ENCODE measurements at regions of chr9 and their contacts with region 1.

Region 1: DNA sequence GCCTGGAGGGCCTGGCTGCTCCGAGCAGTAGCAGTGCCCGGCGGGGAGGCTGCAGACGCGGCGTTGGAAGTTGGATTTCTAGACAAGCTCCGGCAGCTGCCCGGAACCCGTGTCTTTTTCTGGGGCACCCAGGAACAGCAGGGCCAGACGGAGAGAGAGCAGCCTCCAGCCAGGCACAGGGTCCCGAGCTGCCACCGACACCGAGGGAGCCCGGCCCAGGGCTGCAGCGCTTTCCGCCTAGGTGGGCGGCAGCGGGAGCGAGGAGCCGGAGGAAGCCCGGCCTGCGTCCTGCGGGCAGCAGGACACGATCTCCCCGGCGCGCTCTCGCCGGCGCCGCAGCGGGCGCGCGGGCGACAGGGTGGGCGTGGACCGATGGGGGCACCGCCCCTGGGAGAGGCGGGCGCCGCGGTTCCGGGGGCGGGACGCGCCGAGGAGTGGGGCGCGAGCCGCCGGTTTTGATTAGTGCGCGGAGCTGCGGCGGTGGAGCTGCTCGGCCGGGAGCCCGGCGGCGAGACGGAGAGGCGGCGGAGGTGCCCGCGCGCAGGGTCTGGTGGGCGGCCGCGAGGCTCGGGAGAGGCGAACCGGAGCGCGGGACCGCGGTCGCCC is at the start of gene UGCG:
- DNase-seq: peak; percentile 68 to 96
- H3K4me3 ChIP-seq: peak within 1 kb of the TSS; percentile 76
- H3K27ac ChIP-seq: peak within 1 kb of the TSS; percentile 83
- H3K4me1 ChIP-seq: peaks cover 59% of the 10 kb centered on the region
- H3K27me3 ChIP-seq: no peaks in the 10 kb centered on the region
- CTCF ChIP-seq: no peak
- total RNA-seq, gene UGCG: 79.8 and 88.7 TPM in 2 replicates

Region 2: DNA sequence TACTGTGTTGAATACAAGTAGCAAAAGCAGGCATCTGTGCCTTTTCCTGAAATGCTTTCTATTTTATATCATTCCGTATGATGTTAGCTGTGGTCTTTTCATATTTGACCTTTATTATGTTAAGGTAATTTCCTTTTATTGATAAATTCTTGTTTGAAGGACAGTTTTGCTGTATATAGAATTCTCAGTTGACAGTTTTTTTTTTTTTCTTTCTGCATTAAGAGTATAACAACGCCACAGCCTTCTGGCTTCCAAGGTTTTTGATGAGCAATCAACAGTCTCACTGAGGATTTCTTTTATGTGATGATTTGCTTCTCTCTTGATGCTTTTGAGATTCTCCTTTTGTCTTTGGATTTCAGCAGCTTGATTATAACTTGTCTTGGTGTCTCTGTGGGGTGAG is 347.8 kb before region 1 on chr9:
- CTCF ChIA-PET with region 1: no interaction called
- POLR2A ChIA-PET with region 1: no interaction called
- intact Hi-C with region 1: no loop called
- DNase-seq: no peak
- H3K4me3 ChIP-seq: no peak overlapping the region
- H3K27ac ChIP-seq: no peak overlapping the region
- H3K4me1 ChIP-seq: no peaks in the 10 kb centered on the region
- H3K27me3 ChIP-seq: no peaks in the 10 kb centered on the region
- CTCF ChIP-seq: no peak

Region 3: GRCh38 chr9:111759762-111760639 is 136.5 kb before region 1 on chr9:
- CTCF ChIA-PET with region 1: no interaction called
- POLR2A ChIA-PET with region 1: interaction called, 3 read pairs
- intact Hi-C with region 1: loop called (anchors 1 kb)
- DNase-seq: peak; percentile 53 to 73
- H3K4me3 ChIP-seq: no peak overlapping the region
- H3K27ac ChIP-seq: no peak overlapping the region
- H3K4me1 ChIP-seq: peaks cover 6% of the 10 kb centered on the region; the same call in 1 of the 2 replicates
- H3K27me3 ChIP-seq: no peaks in the 10 kb centered on the region
- CTCF ChIP-seq: peak; percentile 81

Region 4: DNA sequence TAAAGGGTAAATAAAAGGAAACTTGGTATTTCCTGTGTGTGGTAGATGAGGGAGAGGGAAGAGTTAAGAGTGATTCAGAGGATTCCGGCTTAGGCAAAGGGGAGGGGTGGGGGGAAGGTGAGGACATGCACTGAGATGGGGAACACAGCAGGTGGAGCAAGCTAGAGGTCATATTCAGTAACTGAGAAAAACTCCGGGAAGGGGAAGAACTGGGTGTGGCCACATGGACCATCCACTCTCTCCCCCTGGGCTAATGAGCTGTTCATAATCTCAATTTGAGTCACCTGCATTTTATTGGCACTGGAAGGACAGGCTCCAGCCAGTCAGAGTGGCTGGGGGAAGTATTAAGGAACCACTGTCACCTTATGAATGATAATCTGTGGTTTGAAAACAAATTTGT is 44.9 kb before region 1 on chr9:
- CTCF ChIA-PET with region 1: no interaction called
- POLR2A ChIA-PET with region 1: interaction called, 3 read pairs
- intact Hi-C with region 1: loop called (anchors 1 kb)
- DNase-seq: peak; percentile 84 to 97
- H3K4me3 ChIP-seq: no peak overlapping the region
- H3K27ac ChIP-seq: peak overlapping the region; percentile 82
- H3K4me1 ChIP-seq: peaks cover 47% of the 10 kb centered on the region
- H3K27me3 ChIP-seq: no peaks in the 10 kb centered on the region
- CTCF ChIP-seq: no peak

Region 5: DNA sequence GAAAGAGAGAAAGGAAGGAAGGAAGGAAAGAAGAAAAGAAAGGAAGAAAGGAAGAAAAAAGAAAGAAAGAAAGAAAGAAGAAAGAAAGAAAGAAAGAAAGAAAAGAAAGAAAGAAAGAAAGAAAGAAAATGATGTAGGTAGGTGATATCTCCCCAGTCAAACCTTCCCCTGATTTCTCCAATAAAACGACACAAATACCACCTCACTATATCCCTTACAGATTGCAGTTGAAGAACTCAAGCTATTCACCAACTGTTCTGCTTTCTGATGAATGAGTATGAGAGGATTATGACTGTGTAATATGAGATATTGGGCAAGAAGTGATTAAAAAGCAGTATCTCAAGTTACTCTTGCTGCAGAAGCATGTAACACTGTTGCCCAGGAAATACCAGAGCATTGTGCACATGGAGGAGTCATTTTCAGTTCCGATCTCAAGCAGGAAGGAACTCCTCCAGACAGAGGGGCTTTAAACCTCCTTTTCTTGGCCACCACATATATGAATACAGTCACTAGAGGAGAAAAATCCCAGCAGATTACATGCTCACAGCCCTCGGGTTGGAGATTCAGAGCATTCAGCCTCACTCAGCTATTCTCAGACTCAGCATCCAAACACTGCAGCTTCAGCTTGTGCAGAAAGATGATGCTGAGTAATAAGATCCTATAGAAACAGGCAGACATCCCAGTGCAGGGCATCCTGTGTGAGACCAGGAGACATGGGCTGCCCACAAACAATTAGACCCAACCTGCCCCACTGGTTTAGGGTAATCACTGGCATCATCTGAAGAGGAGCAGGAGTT is 61.6 kb after region 1 on chr9:
- CTCF ChIA-PET with region 1: interaction called, 3 read pairs
- POLR2A ChIA-PET with region 1: interaction called, 13 read pairs
- intact Hi-C with region 1: loop called (anchors 1 kb)
- DNase-seq: peak; percentile 68 to 96
- H3K4me3 ChIP-seq: peak overlapping the region; percentile 7; the same call in 1 of the 2 replicates
- H3K27ac ChIP-seq: peak overlapping the region; percentile 83
- H3K4me1 ChIP-seq: peaks cover 35% of the 10 kb centered on the region
- H3K27me3 ChIP-seq: no peaks in the 10 kb centered on the region
- CTCF ChIP-seq: no peak

Region 6: DNA sequence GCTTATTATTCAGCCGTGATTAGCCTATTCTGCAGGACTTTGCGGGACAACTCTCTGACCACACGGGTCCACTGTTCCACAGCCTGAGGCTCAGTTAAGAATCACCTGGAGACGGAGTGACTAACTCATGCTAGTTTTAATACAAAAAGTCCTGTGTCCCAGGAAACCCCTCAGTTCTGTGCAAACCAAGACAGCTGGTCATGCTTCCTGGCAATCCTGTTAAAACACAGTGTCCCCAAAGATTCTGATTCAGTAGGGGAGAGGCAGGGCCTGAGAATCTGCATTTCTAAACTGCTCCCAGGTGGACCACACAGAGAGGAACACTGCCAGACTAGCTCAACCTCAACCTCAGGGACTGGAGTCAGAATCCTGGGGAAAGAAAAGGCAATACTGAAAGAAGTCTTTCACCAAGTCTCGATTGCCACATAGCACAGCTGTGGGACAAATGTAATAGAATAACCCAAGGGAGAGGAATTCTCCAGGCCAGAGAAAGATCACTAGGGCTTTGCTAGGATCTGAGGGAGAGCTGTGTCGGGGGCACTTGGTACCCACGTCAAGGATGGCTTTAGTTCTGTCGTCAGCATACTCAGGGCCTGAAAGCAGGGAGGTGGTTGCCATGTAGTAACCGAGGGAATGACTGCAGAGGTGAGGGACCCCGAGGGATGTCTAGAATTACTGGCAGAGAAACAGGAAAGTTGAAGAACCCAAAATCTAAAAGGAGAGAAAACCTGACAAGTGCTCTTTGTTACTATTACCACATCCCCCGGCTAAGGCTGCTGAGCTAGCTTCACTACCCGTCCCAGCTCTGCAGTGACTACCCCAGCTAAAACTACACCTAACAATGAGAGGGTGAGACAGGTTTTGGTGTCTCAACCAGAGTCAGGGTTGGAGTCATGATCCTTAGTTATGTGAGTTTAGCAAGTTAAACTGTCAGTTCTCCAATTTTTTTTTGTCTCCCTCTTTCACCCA is 270.0 kb after region 1 on chr9:
- CTCF ChIA-PET with region 1: no interaction called
- POLR2A ChIA-PET with region 1: no interaction called
- intact Hi-C with region 1: no loop called
- DNase-seq: peak; percentile 61 to 83
- H3K4me3 ChIP-seq: no peak overlapping the region
- H3K27ac ChIP-seq: peak overlapping the region; percentile 70
- H3K4me1 ChIP-seq: peaks cover 60% of the 10 kb centered on the region
- H3K27me3 ChIP-seq: no peaks in the 10 kb centered on the region
- CTCF ChIP-seq: no peak; the same call in 1 of the 2 replicates